Activated CD8-positive, alpha-beta memory T cell treated with anti-CD3 and anti-CD28 coated beads, Interleukin-2, amount 10 ng/mL, durations not matched to agents 7 days and 5 days (primary cell): ENCODE measurements at regions of chr6 and their contacts with region 1.

Region 1: GRCh38 chr6:41424370-41425058 is 89.1 kb downstream of the NCR2 start:
- DNase-seq: peak; percentile 85
- ATAC-seq: peak; percentile 59
- H3K4me3 Mint-ChIP-seq: no peak overlapping the region
- H3K27ac Mint-ChIP-seq: no peak overlapping the region
- H3K4me1 Mint-ChIP-seq: peaks cover 2% of the 10 kb centered on the region
- H3K27me3 Mint-ChIP-seq: peaks cover 44% of the 10 kb centered on the region

Region 2: DNA sequence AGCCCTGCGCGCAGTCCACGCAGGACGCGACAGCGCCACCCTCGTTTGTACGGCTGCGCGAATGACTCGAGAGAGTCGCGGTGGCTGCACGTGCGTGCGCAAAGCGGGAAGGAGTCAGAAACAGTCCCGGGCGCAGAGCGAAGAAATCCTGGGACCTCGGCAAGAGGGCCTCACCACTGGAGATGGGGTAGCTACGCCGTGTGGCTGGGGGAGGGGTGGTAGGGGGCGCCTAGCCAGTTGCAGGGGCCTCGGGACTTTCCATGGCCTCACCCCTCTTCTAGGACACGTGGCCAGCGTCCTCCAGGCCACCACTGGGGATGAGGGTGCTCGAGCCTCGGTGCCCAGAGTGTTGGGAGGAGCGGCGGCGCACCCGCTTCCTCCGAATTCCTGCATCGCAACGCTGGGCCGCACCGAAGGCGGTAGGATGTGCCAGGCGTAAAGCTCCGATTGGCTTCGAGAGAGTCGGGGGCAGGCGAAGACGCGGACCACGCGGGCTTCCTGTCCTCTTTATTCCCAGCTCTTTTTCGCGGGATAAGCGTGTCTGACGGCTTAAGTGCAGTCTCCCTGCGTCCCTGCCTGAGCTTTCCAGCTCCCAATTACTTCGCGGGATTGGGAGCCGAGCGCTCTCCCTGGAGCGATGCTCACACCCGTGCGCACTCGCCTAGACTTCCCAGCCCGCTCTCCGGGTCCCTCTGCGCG is 50.4 kb before region 1 on chr6:
- CTCF ChIA-PET with region 1: interaction called, 12 read pairs
- DNase-seq: peak; percentile 39
- ATAC-seq: no peak
- H3K4me3 Mint-ChIP-seq: no peak overlapping the region
- H3K27ac Mint-ChIP-seq: no peak overlapping the region
- H3K4me1 Mint-ChIP-seq: peaks cover 28% of the 10 kb centered on the region
- H3K27me3 Mint-ChIP-seq: peaks cover 92% of the 10 kb centered on the region

Region 3: GRCh38 chr6:41442800-41443501 is 18.4 kb after region 1 on chr6:
- CTCF ChIA-PET with region 1: interaction called, 12 read pairs
- DNase-seq: no peak
- ATAC-seq: no peak
- H3K4me3 Mint-ChIP-seq: no peak overlapping the region
- H3K27ac Mint-ChIP-seq: no peak overlapping the region
- H3K4me1 Mint-ChIP-seq: peaks cover 37% of the 10 kb centered on the region
- H3K27me3 Mint-ChIP-seq: peaks cover 57% of the 10 kb centered on the region

Region 4: DNA sequence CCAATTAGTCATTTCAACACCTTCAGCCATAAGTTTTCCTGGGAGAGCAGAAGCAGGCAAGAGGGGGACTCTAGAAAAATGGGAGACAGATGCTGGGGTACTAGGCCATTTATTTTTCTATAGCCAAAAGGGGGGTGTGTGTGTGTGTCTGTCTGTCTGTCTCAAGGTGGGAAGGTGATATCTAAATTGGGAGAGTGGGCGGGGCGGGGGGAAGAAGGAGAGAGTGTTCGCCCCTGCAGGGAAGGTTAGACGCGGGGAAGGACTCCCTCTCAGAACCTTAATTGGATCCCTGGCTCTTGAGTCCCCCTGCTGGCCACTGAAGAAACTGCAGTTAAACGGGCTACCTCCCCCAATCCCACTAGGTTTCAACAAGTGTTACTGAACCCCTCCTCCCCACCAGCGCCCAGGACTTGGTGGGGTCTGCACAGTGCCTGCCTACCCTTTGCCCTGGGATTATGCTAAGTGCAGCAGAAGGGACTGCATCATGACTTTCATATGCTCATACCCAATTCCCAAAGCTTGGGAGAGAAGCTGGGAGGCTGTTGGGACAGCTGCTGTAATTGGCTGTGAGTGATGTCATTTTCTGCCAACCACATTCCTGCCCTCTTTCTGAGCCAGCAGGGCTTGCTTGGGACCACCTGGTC is 167.5 kb after region 1 on chr6:
- CTCF ChIA-PET with region 1: interaction called, 28 read pairs
- DNase-seq: peak; percentile 82
- ATAC-seq: peak; percentile 54
- H3K4me3 Mint-ChIP-seq: no peak overlapping the region
- H3K27ac Mint-ChIP-seq: no peak overlapping the region
- H3K4me1 Mint-ChIP-seq: no peaks in the 10 kb centered on the region
- H3K27me3 Mint-ChIP-seq: no peaks in the 10 kb centered on the region